Activated CD4-positive, alpha-beta T cell treated with anti-CD3 and anti-CD28 coated beads, Interleukin-2, amount 10 ng/mL, durations not matched to agents 24 days and 14 days (primary cell): ENCODE measurements at regions of chr12 and their contacts with region 1.

Region 1: DNA sequence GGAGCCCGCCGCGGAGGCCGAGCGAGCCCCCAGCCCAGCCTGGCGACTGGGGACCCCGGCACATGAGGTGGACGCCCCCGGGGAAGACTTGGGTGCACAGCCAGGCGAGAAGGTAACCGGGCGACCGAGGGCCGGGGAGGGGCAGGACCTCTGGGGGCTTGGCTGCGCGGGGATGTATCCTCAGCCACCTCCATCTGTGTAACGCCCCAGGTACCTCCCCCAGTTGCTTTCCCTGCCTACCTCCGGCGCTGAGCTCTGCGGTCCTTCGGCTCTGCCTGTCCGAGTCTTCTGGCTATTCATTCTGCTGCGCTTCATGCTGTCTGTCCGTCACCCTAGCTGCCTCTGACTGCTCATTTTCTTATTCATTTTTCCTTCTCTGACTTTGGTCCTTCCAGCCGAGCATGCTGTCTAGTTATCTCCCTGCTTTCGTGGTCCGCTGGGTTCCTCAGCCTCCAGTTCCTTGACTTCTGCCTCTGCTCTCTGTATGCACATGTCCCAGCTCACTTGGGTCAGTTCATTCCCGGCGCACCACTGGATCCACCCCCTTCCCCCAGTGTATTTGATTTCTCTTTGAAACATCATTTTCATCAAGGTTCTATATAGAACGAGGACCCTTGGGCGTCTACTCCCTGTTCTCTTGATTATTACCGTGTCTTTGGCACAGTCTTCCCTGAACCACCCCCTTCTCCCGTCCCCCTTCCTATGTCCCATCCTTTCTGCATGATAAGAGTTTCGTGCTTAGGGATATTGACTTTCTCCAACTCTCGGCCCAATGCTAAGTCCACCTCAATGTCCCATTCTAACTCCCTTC is 612 bp downstream of the PHC1 start:
- DNase-seq: peak; percentile 90
- H3K4me3 Mint-ChIP-seq: no peak overlapping the region
- H3K27ac Mint-ChIP-seq: no peak overlapping the region
- H3K4me1 Mint-ChIP-seq: peaks cover 9% of the 10 kb centered on the region
- H3K27me3 Mint-ChIP-seq: peaks cover 13% of the 10 kb centered on the region

Region 2: GRCh38 chr12:8697476-8698131 is 217.3 kb before region 1 on chr12 and contains the start of gene RIMKLB:
- intact Hi-C with region 1: loop called (anchors 5 kb)
- DNase-seq: peak; percentile 88
- H3K4me3 Mint-ChIP-seq: peak within 1 kb of the TSS; percentile 89
- H3K27ac Mint-ChIP-seq: peak within 1 kb of the TSS; percentile 79
- H3K4me1 Mint-ChIP-seq: peaks cover 12% of the 10 kb centered on the region
- H3K27me3 Mint-ChIP-seq: peaks cover 55% of the 10 kb centered on the region
- total RNA-seq, gene RIMKLB: 0.68 and 0.88 TPM in 2 replicates

Region 3: DNA sequence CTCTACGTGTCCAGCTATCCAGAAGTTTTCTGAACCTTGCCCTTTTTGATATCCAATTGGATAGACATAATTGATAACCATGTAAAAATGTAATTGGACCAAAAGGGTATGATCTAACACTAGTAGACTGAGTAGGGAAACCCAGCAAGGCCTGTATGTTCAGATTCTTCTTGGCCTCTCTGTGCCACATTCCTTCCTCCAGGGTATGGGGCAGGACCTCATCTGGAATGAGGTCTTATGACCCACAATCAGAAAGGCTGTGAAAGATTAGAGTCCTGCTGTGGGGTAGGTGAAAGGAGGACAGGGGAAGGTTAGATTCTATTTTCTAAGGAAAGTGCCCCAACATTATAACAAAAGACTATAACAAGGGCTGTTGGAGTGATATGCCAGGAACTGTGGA is 143.8 kb before region 1 on chr12:
- intact Hi-C with region 1: no loop called
- DNase-seq: no peak
- H3K4me3 Mint-ChIP-seq: no peak overlapping the region
- H3K27ac Mint-ChIP-seq: no peak overlapping the region
- H3K4me1 Mint-ChIP-seq: no peaks in the 10 kb centered on the region
- H3K27me3 Mint-ChIP-seq: no peaks in the 10 kb centered on the region

Region 4: GRCh38 chr12:8823565-8824300 is 91.2 kb before region 1 on chr12:
- intact Hi-C with region 1: no loop called
- DNase-seq: no peak
- H3K4me3 Mint-ChIP-seq: no peak overlapping the region
- H3K27ac Mint-ChIP-seq: no peak overlapping the region
- H3K4me1 Mint-ChIP-seq: peaks cover 3% of the 10 kb centered on the region
- H3K27me3 Mint-ChIP-seq: peaks cover 17% of the 10 kb centered on the region

Region 5: GRCh38 chr12:8849876-8850275 is 65.0 kb before region 1 on chr12:
- intact Hi-C with region 1: no loop called
- DNase-seq: no peak
- H3K4me3 Mint-ChIP-seq: no peak overlapping the region
- H3K27ac Mint-ChIP-seq: no peak overlapping the region
- H3K4me1 Mint-ChIP-seq: no peaks in the 10 kb centered on the region
- H3K27me3 Mint-ChIP-seq: no peaks in the 10 kb centered on the region

Region 6: GRCh38 chr12:9039397-9039977 is 124.6 kb after region 1 on chr12:
- intact Hi-C with region 1: loop called (anchors 5 kb)
- DNase-seq: peak; percentile 76
- H3K4me3 Mint-ChIP-seq: no peak overlapping the region
- H3K27ac Mint-ChIP-seq: no peak overlapping the region
- H3K4me1 Mint-ChIP-seq: peaks cover 19% of the 10 kb centered on the region
- H3K27me3 Mint-ChIP-seq: peaks cover 12% of the 10 kb centered on the region